ENCODE measurements at regions of chr10 and their contacts with region 1.

Region 1: DNA sequence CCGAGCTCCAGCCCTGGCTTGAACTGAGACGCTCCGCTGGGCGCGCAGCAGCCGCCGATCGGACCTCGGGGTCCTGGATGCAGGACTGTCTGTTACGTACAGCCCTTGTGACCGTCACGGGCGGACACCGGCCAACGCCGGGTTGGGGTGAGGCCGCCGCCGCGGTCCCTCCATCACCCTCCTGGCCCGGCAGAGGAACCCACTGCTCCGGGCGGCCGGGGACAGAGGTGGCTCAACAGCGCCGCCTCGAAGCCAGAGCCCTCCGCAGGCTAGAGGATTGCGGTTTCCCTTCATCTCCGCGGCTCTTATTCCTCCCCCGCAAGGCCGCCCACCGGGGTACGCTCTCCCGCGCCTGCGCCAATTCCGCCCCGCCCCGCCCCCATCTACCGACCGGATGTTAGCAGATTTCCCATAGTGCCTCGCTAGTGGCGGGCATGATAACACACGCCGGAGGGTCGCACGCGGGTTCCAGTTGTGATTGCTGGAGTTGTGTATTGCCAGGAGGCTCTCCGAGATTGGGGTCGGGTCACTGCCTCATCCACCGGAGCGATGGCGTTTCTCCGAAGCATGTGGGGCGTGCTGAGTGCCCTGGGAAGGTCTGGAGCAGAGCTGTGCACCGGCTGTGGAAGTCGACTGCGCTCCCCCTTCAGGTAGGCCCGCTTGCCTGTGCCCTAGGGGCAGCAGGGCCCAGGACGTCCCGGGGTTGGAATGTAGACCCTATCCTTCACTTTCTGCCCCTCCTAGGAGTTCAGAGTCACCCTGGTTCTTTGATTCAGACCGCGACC is at the start of gene TFAM:
- DNase-seq: peak; percentile 95
- ATAC-seq: peak; percentile 87
- H3K4me3 ChIP-seq: peak within 1 kb of the TSS; percentile 87
- H3K27ac ChIP-seq: peak within 1 kb of the TSS; percentile 55
- H3K4me1 ChIP-seq: peaks cover 25% of the 10 kb centered on the region
- H3K27me3 ChIP-seq: no peaks in the 10 kb centered on the region
- CTCF ChIP-seq: peak; percentile 75
- total RNA-seq, gene TFAM: 96.8 and 121 TPM in 2 replicates

Region 2: GRCh38 chr10:58319599-58319998 is 65.6 kb before region 1 on chr10:
- CTCF ChIA-PET with region 1: no interaction called
- POLR2A ChIA-PET with region 1: no interaction called
- intact Hi-C with region 1: loop called (anchors 5 kb)
- DNase-seq: peak; percentile 30
- ATAC-seq: peak; percentile 68
- H3K4me3 ChIP-seq: no peak overlapping the region
- H3K27ac ChIP-seq: no peak overlapping the region
- H3K4me1 ChIP-seq: peaks cover 11% of the 10 kb centered on the region
- H3K27me3 ChIP-seq: 0 out of 2 replicates have a peak, but pooled peaks cover 6% of the 10 kb centered on the region
- CTCF ChIP-seq: peak; percentile 35; the same call in 1 of the 2 replicates

Region 3: DNA sequence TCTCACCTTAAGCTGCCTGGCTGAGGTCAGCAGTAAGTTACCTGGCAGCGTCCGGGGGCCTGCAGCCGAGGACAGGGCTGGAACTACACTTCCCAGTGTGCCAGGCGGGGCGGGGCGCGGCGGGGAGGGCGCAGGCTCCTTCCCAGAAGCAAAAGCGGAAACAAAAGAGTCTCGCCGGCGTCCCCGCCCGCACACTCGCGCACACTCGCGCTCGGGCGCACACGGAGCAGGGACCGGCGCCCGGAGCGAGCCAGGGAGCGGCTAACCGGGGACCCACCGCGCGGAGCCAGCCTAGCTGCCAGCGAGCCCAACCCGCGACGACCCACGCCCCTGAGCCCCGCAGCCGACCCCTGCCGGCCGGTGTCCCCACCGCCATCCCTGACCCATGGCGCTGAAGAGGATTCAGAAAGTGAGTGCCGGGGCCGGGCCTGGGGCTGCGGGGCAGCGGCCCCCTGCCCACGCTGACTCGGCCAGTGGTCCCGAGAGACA is 50.3 kb before region 1 on chr10 and contains the start of gene UBE2D1:
- CTCF ChIA-PET with region 1: no interaction called
- POLR2A ChIA-PET with region 1: interaction called, 4 read pairs
- intact Hi-C with region 1: loop called (anchors 1 kb)
- DNase-seq: peak; percentile 88
- ATAC-seq: peak; percentile 96
- H3K4me3 ChIP-seq: peak within 1 kb of the TSS; percentile 75
- H3K27ac ChIP-seq: peak within 1 kb of the TSS; percentile 8
- H3K4me1 ChIP-seq: peaks cover 15% of the 10 kb centered on the region
- H3K27me3 ChIP-seq: peaks cover 11% of the 10 kb centered on the region; the same call in 1 of the 2 replicates
- CTCF ChIP-seq: 0 out of 2 replicates have a peak, but pooled peaks have one; percentile 11
- total RNA-seq, gene UBE2D1: 13.6 and 13.8 TPM in 2 replicates

Region 4: GRCh38 chr10:58352956-58353610 is 32.1 kb before region 1 on chr10:
- CTCF ChIA-PET with region 1: no interaction called
- POLR2A ChIA-PET with region 1: no interaction called
- intact Hi-C with region 1: loop called (anchors 2 kb)
- DNase-seq: peak; percentile 8
- ATAC-seq: peak; percentile 59
- H3K4me3 ChIP-seq: no peak overlapping the region
- H3K27ac ChIP-seq: no peak overlapping the region
- H3K4me1 ChIP-seq: peaks cover 14% of the 10 kb centered on the region
- H3K27me3 ChIP-seq: no peaks in the 10 kb centered on the region
- CTCF ChIP-seq: no peak

Region 5: DNA sequence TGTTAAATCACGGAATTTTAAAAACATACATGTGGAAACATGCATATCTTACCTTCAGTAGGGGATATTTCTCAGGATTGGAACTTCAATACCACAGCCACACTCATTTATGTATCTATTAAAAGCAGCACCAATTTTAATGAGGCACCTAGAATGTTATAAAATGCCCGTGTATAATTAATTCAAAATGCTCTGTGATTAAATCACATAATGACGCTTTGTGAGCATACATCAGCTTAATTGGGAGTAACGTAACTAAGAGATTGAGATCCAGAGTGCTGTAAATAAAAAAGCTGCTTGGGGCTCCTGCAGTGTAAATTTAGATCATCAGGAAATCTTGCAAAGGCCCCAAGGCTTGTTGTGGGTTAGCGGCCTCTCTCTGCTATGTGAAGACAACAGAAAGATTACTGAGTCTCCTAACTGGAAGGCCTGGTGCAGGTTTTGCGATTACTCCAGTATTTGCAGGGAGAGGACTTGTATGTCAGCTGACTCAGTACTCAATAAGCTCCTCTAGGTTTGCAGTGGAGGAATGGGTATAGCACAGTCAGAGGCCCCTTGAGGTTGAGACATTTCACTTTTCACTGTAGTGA is 595.7 kb after region 1 on chr10:
- CTCF ChIA-PET with region 1: no interaction called
- POLR2A ChIA-PET with region 1: no interaction called
- intact Hi-C with region 1: no loop called
- DNase-seq: no peak
- ATAC-seq: no peak
- H3K4me3 ChIP-seq: no peak overlapping the region
- H3K27ac ChIP-seq: no peak overlapping the region
- H3K4me1 ChIP-seq: no peaks in the 10 kb centered on the region
- H3K27me3 ChIP-seq: no peaks in the 10 kb centered on the region
- CTCF ChIP-seq: no peak

Measured in PC-3 (cell line).